Activated CD4-positive, alpha-beta memory T cell treated with anti-CD3 and anti-CD28 coated beads for 36 hours (primary cell): ENCODE measurements at regions of chr1 and their contacts with region 1.

Region 1: GRCh38 chr1:37479255-37480124 is 5.1 kb downstream of the ZC3H12A start:
- DNase-seq: peak; percentile 97
- H3K4me3 Mint-ChIP-seq: peak overlapping the region; percentile 94
- H3K27ac Mint-ChIP-seq: peak overlapping the region; percentile 100
- H3K4me1 Mint-ChIP-seq: peaks cover 38% of the 10 kb centered on the region
- H3K27me3 Mint-ChIP-seq: no peaks in the 10 kb centered on the region

Region 2: DNA sequence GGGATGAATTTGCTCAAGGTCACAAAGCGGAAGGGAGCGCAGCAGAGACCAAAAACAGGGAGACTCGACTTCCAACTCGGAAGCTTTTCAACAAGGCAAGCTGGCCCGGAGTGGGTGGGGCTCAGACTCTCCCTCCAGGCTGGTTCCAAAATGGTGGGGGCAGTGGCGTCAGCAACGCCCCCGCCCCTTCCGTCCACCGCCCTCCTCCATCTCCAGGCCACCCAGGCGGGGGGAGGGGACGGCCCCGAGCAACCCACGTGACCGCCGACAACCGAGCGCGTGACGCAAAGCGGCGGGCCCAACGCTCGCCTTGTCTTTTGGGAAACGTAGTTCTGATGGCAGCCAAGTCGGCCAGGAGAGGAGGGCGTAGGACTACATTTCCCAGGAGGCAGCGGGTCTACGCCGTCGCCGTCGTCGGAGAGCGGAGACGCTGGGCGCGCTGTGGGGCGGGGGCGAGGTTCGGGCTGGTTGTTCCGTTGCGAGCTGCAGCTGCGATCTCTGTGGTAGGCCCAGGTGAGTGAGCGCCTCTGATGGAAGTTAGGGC is 1255.4 kb before region 1 on chr1 and contains the start of gene THRAP3:
- CTCF ChIA-PET with region 1: no interaction called
- POLR2A ChIA-PET with region 1: no interaction called
- intact Hi-C with region 1: loop called (anchors 5 kb)
- DNase-seq: peak; percentile 100
- H3K4me3 Mint-ChIP-seq: peak within 1 kb of the TSS; percentile 99
- H3K27ac Mint-ChIP-seq: peak within 1 kb of the TSS; percentile 100
- H3K4me1 Mint-ChIP-seq: peaks cover 30% of the 10 kb centered on the region
- H3K27me3 Mint-ChIP-seq: no peaks in the 10 kb centered on the region
- total RNA-seq, gene THRAP3: 135 to 138 TPM

Region 3: GRCh38 chr1:37458528-37458927 is 21.0 kb before region 1 on chr1:
- CTCF ChIA-PET with region 1: interaction called, 241 read pairs
- POLR2A ChIA-PET with region 1: interaction called, 3 read pairs
- intact Hi-C with region 1: loop called (anchors 2 kb)
- DNase-seq: no peak
- H3K4me3 Mint-ChIP-seq: no peak overlapping the region
- H3K27ac Mint-ChIP-seq: no peak overlapping the region
- H3K4me1 Mint-ChIP-seq: peaks cover 4% of the 10 kb centered on the region
- H3K27me3 Mint-ChIP-seq: no peaks in the 10 kb centered on the region

Region 4: GRCh38 chr1:37514350-37515184 is 35.1 kb after region 1 on chr1 and contains the start of gene MEAF6:
- CTCF ChIA-PET with region 1: interaction called, 15 read pairs
- POLR2A ChIA-PET with region 1: interaction called, 27 read pairs
- intact Hi-C with region 1: loop called (anchors 1 kb)
- DNase-seq: peak; percentile 87
- H3K4me3 Mint-ChIP-seq: peak within 1 kb of the TSS; percentile 98
- H3K27ac Mint-ChIP-seq: peak within 1 kb of the TSS; percentile 94
- H3K4me1 Mint-ChIP-seq: peaks cover 49% of the 10 kb centered on the region
- H3K27me3 Mint-ChIP-seq: no peaks in the 10 kb centered on the region
- total RNA-seq, gene MEAF6: 89.6 to 89.7 TPM

Region 5: DNA sequence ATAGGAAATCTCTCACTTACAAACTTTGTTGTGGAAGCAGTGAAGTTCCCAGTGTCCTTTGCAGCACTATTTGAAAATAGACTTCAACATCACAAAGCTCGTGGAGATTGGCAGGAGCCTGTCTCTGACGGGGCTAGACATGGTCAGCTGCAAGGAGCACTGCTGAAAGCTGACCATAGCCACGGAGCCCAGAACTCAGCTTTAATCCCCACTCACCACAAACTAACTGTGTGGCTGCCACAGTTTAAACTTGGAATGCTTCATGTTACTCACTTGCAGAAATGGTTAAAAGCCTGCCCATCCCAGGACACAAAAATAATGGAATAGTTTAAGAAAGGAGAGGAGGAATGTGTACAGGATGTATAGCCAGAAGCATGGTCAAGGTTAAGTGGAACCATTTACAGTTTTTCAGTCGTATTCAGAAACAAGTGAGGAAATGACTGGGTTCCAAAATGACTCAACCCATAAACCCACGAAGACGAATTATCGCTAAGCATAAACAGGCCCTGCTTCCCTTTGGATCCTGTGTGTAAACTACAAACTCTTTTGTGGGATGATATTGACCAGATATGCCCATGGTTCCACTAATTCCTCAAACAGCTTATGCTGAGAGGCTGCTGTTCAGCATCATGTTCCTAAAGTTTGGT is 95.5 kb after region 1 on chr1:
- CTCF ChIA-PET with region 1: no interaction called
- POLR2A ChIA-PET with region 1: interaction called, 10 read pairs
- intact Hi-C with region 1: no loop called
- DNase-seq: peak; percentile 17
- H3K4me3 Mint-ChIP-seq: no peak overlapping the region
- H3K27ac Mint-ChIP-seq: peak overlapping the region; percentile 76
- H3K4me1 Mint-ChIP-seq: peaks cover 61% of the 10 kb centered on the region
- H3K27me3 Mint-ChIP-seq: no peaks in the 10 kb centered on the region

Region 6: GRCh38 chr1:37692078-37692833 is 212.8 kb after region 1 on chr1 and contains the start of gene CDCA8:
- CTCF ChIA-PET with region 1: interaction called, 4 read pairs
- POLR2A ChIA-PET with region 1: interaction called, 10 read pairs
- intact Hi-C with region 1: loop called (anchors 1 kb)
- DNase-seq: peak; percentile 99
- H3K4me3 Mint-ChIP-seq: peak within 1 kb of the TSS; percentile 97
- H3K27ac Mint-ChIP-seq: peak within 1 kb of the TSS; percentile 88
- H3K4me1 Mint-ChIP-seq: peaks cover 31% of the 10 kb centered on the region
- H3K27me3 Mint-ChIP-seq: no peaks in the 10 kb centered on the region
- total RNA-seq, gene CDCA8: 55.0 to 56.0 TPM

Region 7: GRCh38 chr1:37931361-37932158 is 452.1 kb after region 1 on chr1:
- CTCF ChIA-PET with region 1: no interaction called
- POLR2A ChIA-PET with region 1: no interaction called
- intact Hi-C with region 1: loop called (anchors 5 kb)
- DNase-seq: peak; percentile 99
- H3K4me3 Mint-ChIP-seq: peak overlapping the region; percentile 91
- H3K27ac Mint-ChIP-seq: peak overlapping the region; percentile 68
- H3K4me1 Mint-ChIP-seq: peaks cover 33% of the 10 kb centered on the region
- H3K27me3 Mint-ChIP-seq: no peaks in the 10 kb centered on the region